Panc1 (cell line): ENCODE measurements at regions of chr17 and their contacts with region 1.

Region 1: GRCh38 chr17:75557075-75557882 is 30.3 kb upstream of the MYO15B start:
- DNase-seq: no peak
- ATAC-seq: peak; percentile 73
- H3K4me3 ChIP-seq: no peak overlapping the region
- H3K27ac ChIP-seq: peak overlapping the region; percentile 82
- H3K4me1 ChIP-seq: peaks cover 71% of the 10 kb centered on the region
- H3K27me3 ChIP-seq: no peaks in the 10 kb centered on the region
- CTCF ChIP-seq: no peak

Region 2: GRCh38 chr17:75447951-75448856 is 109.1 kb before region 1 on chr17:
- CTCF ChIA-PET with region 1: no interaction called
- POLR2A ChIA-PET with region 1: interaction called, 13 read pairs
- in situ Hi-C with region 1: no loop called
- intact Hi-C with region 1: no loop called
- DNase-seq: no peak
- ATAC-seq: no peak
- H3K4me3 ChIP-seq: no peak overlapping the region
- H3K27ac ChIP-seq: no peak overlapping the region
- H3K4me1 ChIP-seq: no peaks in the 10 kb centered on the region
- H3K27me3 ChIP-seq: no peaks in the 10 kb centered on the region
- CTCF ChIP-seq: no peak

Region 3: GRCh38 chr17:75786874-75787273 is 229.6 kb after region 1 on chr17:
- CTCF ChIA-PET with region 1: no interaction called
- POLR2A ChIA-PET with region 1: no interaction called
- in situ Hi-C with region 1: no loop called
- intact Hi-C with region 1: no loop called
- DNase-seq: no peak
- ATAC-seq: no peak
- H3K4me3 ChIP-seq: peak overlapping the region; percentile 59 to 76
- H3K27ac ChIP-seq: peak overlapping the region; percentile 100
- H3K4me1 ChIP-seq: peaks cover 35% of the 10 kb centered on the region
- H3K27me3 ChIP-seq: no peaks in the 10 kb centered on the region
- CTCF ChIP-seq: no peak